AG04449 (cell line): ENCODE measurements at regions of chr10 and their contacts with region 1.

Region 1: DNA sequence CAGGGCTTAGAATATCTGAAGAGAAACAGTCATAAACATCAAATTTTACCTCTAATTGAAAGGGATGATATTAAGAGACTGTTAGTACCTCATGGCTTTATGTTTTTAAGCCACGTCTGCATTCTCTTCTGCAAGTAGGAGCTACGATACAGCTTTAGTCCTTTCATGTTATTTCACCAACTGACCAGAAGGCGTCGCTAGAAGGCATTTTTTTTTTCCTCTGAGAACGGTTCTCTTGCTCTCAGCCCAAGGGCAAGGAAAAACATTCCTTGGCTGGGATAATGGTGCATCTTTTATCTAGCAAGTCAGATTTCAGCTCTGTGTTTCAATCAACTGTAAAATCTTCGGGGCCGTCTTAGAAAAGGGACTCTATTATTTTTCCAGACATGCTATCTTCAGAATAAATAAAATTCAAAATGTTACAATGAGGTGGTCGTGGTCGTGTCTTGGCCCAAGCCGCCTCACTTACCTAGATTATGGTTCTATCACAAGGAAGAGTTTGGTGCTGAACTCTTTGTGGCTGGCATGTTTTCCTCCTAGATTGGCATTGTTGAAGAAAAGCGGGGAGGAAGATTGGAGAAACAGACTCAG is 41.6 kb upstream of the LYZL2 start:
- DNase-seq: peak; percentile 38
- H3K4me3 ChIP-seq: no peak overlapping the region; the same call in 1 of the 2 replicates
- CTCF ChIP-seq: peak; percentile 60

Region 2: DNA sequence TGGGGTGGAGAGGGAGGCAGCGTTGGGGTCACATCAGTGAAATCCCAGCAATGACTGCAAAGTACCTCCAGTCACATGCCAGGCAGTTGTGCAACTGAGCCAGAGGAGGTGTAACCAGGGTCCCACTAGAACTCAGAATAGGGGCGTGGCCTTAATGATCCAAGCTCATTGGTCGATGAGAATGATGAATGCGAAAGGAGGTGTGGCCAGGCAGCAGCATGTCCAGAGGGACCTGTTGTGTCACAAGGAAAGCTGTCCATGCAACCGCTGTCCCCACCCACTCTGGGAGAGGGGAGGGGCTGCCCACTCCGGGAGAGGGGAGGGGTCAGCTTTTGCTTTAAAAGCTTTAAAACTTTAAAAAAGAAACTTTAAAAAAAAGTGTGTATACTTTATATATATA is 296.8 kb before region 1 on chr10:
- CTCF ChIA-PET with region 1: no interaction called
- POLR2A ChIA-PET with region 1: no interaction called
- DNase-seq: no peak
- H3K4me3 ChIP-seq: no peak overlapping the region
- CTCF ChIP-seq: no peak

Region 3: GRCh38 chr10:30553625-30554439 is 117.3 kb before region 1 on chr10:
- CTCF ChIA-PET with region 1: no interaction called
- POLR2A ChIA-PET with region 1: no interaction called
- DNase-seq: no peak
- H3K4me3 ChIP-seq: no peak overlapping the region
- CTCF ChIP-seq: no peak

Region 4: GRCh38 chr10:30656233-30656632 is 14.9 kb before region 1 on chr10:
- CTCF ChIA-PET with region 1: interaction called, 28 read pairs
- POLR2A ChIA-PET with region 1: no interaction called
- DNase-seq: no peak
- H3K4me3 ChIP-seq: no peak overlapping the region
- CTCF ChIP-seq: no peak

Region 5: GRCh38 chr10:31031558-31032257 is 360.6 kb after region 1 on chr10 and contains the start of gene ZNF438:
- CTCF ChIA-PET with region 1: no interaction called
- POLR2A ChIA-PET with region 1: no interaction called
- DNase-seq: peak; percentile 59
- H3K4me3 ChIP-seq: peak within 1 kb of the TSS; percentile 72
- CTCF ChIP-seq: peak; percentile 47